HepG2 (cell line): ENCODE measurements at regions of chr6 and their contacts with region 1.

Region 1: GRCh38 chr6:157667211-157668008 is 155.6 kb upstream of the SNX9 start:
- DNase-seq: peak; percentile 58
- ATAC-seq: peak; percentile 62
- H3K4me3 ChIP-seq: no peak overlapping the region
- H3K27ac ChIP-seq: no peak overlapping the region
- H3K4me1 ChIP-seq: peaks cover 27% of the 10 kb centered on the region
- H3K27me3 ChIP-seq: no peaks in the 10 kb centered on the region
- CTCF ChIP-seq: peak; percentile 86
- EP300 ChIP-seq: no peak; a peak in 1 of 4 replicates
- POLR2A ChIP-seq: no peak
- RAD21 ChIP-seq: peak; percentile 78

Region 2: DNA sequence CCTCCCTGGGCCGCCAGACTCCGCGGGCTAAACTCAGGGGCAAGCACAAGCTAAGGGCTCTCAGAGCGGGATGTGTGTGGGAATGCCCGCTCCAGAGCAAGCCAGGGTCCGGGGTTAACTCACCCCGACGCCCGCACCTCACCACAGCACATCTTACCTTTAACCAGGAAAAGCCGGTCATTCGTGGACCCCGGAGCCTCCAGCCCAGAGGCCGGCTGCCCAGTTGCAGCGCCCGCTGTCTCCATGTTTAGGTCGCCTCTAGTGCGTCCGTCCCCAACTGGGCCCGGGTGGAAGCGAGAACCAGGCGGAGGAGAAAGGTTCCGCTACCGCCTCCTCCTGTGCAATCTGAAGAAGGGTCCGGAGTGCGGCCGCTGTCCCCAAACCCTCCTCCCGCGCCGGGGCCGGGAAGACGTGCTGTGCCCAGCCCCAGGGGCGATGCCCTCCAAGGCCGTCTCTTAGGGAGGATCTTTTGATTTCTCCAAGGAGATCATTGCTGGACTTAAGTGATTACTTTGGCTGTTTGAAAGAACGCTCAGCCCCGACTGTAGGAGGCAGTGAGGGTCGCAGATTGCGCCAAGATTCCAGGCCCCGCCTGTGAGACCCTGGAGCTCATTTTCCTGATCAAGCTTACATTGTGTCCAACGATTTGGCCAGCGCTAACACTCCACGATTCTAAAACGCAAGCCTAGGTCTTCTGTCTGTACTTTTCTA is 344.0 kb before region 1 on chr6 and contains the start of gene TMEM242:
- CTCF ChIA-PET with region 1: no interaction called
- POLR2A ChIA-PET with region 1: interaction called, 3 read pairs
- in situ Hi-C with region 1: loop called (anchors 10 kb)
- intact Hi-C with region 1: loop called (anchors 1 kb)
- DNase-seq: peak; percentile 89
- ATAC-seq: peak; percentile 94
- H3K4me3 ChIP-seq: peak within 1 kb of the TSS; percentile 94 to 96 (median 96)
- H3K27ac ChIP-seq: peak within 1 kb of the TSS; percentile 90
- H3K4me1 ChIP-seq: peaks cover 52% of the 10 kb centered on the region
- H3K27me3 ChIP-seq: no peaks in the 10 kb centered on the region; a peak in 2 of 5 replicates
- CTCF ChIP-seq: peak; percentile 42; the same call in 1 of the 2 replicates
- EP300 ChIP-seq: peak; percentile 80 to 85; a peak in 3 of 4 replicates
- POLR2A ChIP-seq: peak; percentile 96 to 97
- RAD21 ChIP-seq: peak; percentile 71
- total RNA-seq, gene TMEM242: 6.4 and 11.1 TPM in 2 replicates

Region 3: GRCh38 chr6:157379656-157380454 is 287.6 kb before region 1 on chr6:
- CTCF ChIA-PET with region 1: no interaction called
- POLR2A ChIA-PET with region 1: no interaction called
- in situ Hi-C with region 1: no loop called
- intact Hi-C with region 1: loop called (anchors 1 kb)
- DNase-seq: peak; percentile 90
- ATAC-seq: peak; percentile 94
- H3K4me3 ChIP-seq: peak overlapping the region; percentile 91 to 95 (median 92)
- H3K27ac ChIP-seq: peak overlapping the region; percentile 56
- H3K4me1 ChIP-seq: peaks cover 47% of the 10 kb centered on the region
- H3K27me3 ChIP-seq: no peaks in the 10 kb centered on the region; a peak in 1 of 5 replicates
- CTCF ChIP-seq: peak; percentile 19; the same call in 1 of the 2 replicates
- EP300 ChIP-seq: no peak
- POLR2A ChIP-seq: peak in 1 of 2 experiments; percentile 49; a peak in 2 of 4 replicates
- RAD21 ChIP-seq: no peak

Region 4: DNA sequence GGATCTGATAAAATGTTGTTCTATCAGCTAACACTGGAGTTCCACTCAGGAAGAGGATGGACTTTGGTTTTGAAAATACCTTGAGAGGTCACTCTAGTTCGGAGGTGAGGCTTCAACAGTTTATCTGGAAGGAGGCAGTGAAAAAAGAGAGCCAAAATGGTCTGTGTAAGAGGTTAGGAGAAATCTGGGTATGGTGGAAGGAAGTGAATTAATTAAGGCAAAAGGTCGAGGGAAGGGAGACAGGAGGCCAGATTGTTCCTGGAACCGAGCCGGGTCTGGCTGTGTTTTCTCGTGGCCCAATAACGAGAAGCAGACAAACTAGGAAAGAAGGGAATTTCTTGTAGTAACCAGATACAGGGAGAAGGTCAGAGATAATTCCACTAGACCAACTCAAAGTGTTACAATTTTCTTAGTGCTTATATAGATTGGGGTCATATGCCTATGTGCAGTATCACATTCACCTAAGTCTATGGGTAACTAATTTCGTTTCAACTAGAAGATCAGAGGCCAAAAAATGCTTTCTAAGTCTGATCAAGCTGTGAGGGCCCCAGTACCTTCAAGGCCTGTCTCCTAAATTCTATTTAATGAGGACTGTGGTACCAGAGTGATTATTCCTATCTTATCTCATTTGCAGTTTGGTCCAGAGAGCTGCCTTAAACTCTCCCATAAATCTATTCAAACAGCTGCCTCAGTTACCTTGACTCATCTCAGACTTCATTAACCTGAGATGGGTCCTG is 59.6 kb after region 1 on chr6:
- CTCF ChIA-PET with region 1: no interaction called
- POLR2A ChIA-PET with region 1: interaction called, 16 read pairs
- in situ Hi-C with region 1: no loop called
- intact Hi-C with region 1: no loop called
- DNase-seq: no peak
- ATAC-seq: no peak
- H3K4me3 ChIP-seq: no peak overlapping the region; a peak in 1 of 6 replicates
- H3K27ac ChIP-seq: peak overlapping the region; percentile 94
- H3K4me1 ChIP-seq: peaks cover 72% of the 10 kb centered on the region
- H3K27me3 ChIP-seq: no peaks in the 10 kb centered on the region
- CTCF ChIP-seq: no peak
- EP300 ChIP-seq: no peak
- POLR2A ChIP-seq: no peak
- RAD21 ChIP-seq: no peak

Region 5: GRCh38 chr6:157873735-157874344 is 206.4 kb after region 1 on chr6:
- CTCF ChIA-PET with region 1: interaction called, 4 read pairs
- POLR2A ChIA-PET with region 1: no interaction called
- in situ Hi-C with region 1: no loop called
- intact Hi-C with region 1: loop called (anchors 10 kb)
- DNase-seq: peak; percentile 64
- ATAC-seq: peak; percentile 97
- H3K4me3 ChIP-seq: no peak overlapping the region
- H3K27ac ChIP-seq: no peak overlapping the region
- H3K4me1 ChIP-seq: no peaks in the 10 kb centered on the region
- H3K27me3 ChIP-seq: no peaks in the 10 kb centered on the region
- CTCF ChIP-seq: peak; percentile 91
- EP300 ChIP-seq: no peak
- POLR2A ChIP-seq: no peak
- RAD21 ChIP-seq: peak; percentile 92